K562 (cell line): ENCODE measurements at regions of chr4 and their contacts with region 1.

Region 1: DNA sequence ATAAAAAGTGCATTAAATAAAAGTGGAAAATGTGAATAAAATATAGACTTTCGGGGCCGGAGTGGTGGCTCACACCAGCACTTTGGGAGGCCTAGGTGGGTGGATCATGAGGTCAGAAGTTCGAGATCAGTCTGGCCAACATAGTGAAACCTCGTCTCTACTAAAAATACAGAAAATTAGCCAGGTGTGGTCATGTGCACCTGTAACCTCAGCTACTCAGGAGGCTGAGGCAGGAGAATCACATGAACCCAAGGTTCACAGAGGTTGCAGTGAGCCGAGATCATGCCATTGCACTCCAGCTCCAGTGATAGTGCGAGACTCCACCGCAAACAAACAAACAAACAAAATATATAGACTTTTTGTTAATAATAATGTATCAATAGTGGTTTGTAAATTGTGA is 293.6 kb upstream of the TRAM1L1 start:
- DNase-seq: no peak
- ATAC-seq: no peak
- H3K4me3 ChIP-seq: no peak overlapping the region
- H3K27ac ChIP-seq: no peak overlapping the region
- H3K4me1 ChIP-seq: no peaks in the 10 kb centered on the region
- H3K27me3 ChIP-seq: no peaks in the 10 kb centered on the region
- CTCF ChIP-seq: no peak
- EP300 ChIP-seq: no peak
- POLR2A ChIP-seq: no peak
- RAD21 ChIP-seq: no peak

Region 2: GRCh38 chr4:117412661-117413060 is 33.7 kb after region 1 on chr4:
- CTCF ChIA-PET with region 1: no interaction called
- POLR2A ChIA-PET with region 1: no interaction called
- in situ Hi-C with region 1: no loop called
- intact Hi-C with region 1: loop called (anchors 2 kb)
- DNase-seq: no peak
- ATAC-seq: no peak
- H3K4me3 ChIP-seq: no peak overlapping the region
- H3K27ac ChIP-seq: no peak overlapping the region
- H3K4me1 ChIP-seq: no peaks in the 10 kb centered on the region
- H3K27me3 ChIP-seq: no peaks in the 10 kb centered on the region
- CTCF ChIP-seq: no peak
- EP300 ChIP-seq: no peak
- POLR2A ChIP-seq: no peak
- RAD21 ChIP-seq: no peak